Naive thymus-derived CD4-positive, alpha-beta T cell (primary cell): ENCODE measurements at regions of chr1 and their contacts with region 1.

Region 1: GRCh38 chr1:93776728-93777127 is 95.1 kb upstream of the BCAR3 start:
- DNase-seq: no peak
- ATAC-seq: no peak
- H3K4me3 ChIP-seq: no peak overlapping the region
- H3K4me3 Mint-ChIP-seq: no peak overlapping the region
- H3K27ac ChIP-seq: no peak overlapping the region
- H3K27ac Mint-ChIP-seq: no peak overlapping the region
- H3K4me1 ChIP-seq: no peaks in the 10 kb centered on the region
- H3K4me1 Mint-ChIP-seq: no peaks in the 10 kb centered on the region
- H3K27me3 ChIP-seq: no peaks in the 10 kb centered on the region
- H3K27me3 Mint-ChIP-seq: peaks cover 0 to 21% (median 4%) of the 10 kb centered on the region in 5 donors

Region 2: DNA sequence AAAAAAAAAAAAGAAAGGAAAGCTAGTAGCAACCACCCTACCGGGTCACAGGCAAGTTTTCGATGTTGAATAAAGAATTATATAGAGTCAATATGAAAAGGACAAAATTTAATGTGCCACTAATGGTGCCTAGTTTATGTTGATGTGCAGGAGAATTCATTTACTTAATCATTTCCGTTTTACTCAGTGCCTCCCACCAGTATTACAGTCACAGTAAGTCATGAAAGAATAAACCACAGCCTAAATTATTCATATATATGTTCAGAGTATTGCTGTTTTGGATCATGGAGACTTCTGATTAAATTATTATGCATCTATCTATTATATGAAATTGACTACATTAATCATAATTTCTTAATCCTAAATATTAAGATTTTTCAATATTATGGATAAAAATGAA is 293.5 kb before region 1 on chr1:
- CTCF ChIA-PET with region 1: no interaction called
- POLR2A ChIA-PET with region 1: no interaction called
- intact Hi-C with region 1: no loop called
- DNase-seq: no peak
- ATAC-seq: no peak
- H3K4me3 ChIP-seq: no peak overlapping the region
- H3K4me3 Mint-ChIP-seq: no peak overlapping the region
- H3K27ac ChIP-seq: no peak overlapping the region
- H3K27ac Mint-ChIP-seq: no peak overlapping the region
- H3K4me1 ChIP-seq: no peaks in the 10 kb centered on the region
- H3K4me1 Mint-ChIP-seq: no peaks in the 10 kb centered on the region
- H3K27me3 ChIP-seq: no peaks in the 10 kb centered on the region
- H3K27me3 Mint-ChIP-seq: peaks cover 0 to 13% (median 6%) of the 10 kb centered on the region in 5 donors

Region 3: DNA sequence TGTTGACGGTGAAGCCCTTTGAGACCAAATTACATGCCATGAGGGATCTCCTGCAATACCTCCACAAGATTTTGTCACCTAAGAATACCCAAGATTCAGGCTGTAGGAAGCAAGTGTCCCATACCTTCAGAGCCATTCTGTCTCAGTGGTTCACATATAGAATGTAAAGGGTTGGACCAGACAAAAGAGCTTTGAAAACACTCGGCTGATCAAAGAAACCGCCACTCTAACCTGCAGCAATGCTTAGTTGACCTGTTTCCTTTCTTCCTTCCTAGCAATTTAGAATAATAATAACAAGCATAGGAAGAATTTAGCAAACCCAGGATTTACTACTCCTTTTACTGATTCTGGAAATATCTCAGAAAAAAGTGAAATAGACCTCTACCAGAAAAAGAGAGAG is 26.4 kb after region 1 on chr1:
- CTCF ChIA-PET with region 1: no interaction called
- POLR2A ChIA-PET with region 1: no interaction called
- intact Hi-C with region 1: loop called in 1 of 2 experiments (anchors 1 kb)
- DNase-seq: no peak
- ATAC-seq: no peak
- H3K4me3 ChIP-seq: no peak overlapping the region
- H3K4me3 Mint-ChIP-seq: no peak overlapping the region
- H3K27ac ChIP-seq: no peak overlapping the region
- H3K27ac Mint-ChIP-seq: no peak overlapping the region
- H3K4me1 ChIP-seq: no peaks in the 10 kb centered on the region
- H3K4me1 Mint-ChIP-seq: no peaks in the 10 kb centered on the region
- H3K27me3 ChIP-seq: no peaks in the 10 kb centered on the region
- H3K27me3 Mint-ChIP-seq: peaks cover 0 to 40% (median 4%) of the 10 kb centered on the region in 5 donors